ENCODE measurements at regions of chr7 and their contacts with region 1.

Region 1: DNA sequence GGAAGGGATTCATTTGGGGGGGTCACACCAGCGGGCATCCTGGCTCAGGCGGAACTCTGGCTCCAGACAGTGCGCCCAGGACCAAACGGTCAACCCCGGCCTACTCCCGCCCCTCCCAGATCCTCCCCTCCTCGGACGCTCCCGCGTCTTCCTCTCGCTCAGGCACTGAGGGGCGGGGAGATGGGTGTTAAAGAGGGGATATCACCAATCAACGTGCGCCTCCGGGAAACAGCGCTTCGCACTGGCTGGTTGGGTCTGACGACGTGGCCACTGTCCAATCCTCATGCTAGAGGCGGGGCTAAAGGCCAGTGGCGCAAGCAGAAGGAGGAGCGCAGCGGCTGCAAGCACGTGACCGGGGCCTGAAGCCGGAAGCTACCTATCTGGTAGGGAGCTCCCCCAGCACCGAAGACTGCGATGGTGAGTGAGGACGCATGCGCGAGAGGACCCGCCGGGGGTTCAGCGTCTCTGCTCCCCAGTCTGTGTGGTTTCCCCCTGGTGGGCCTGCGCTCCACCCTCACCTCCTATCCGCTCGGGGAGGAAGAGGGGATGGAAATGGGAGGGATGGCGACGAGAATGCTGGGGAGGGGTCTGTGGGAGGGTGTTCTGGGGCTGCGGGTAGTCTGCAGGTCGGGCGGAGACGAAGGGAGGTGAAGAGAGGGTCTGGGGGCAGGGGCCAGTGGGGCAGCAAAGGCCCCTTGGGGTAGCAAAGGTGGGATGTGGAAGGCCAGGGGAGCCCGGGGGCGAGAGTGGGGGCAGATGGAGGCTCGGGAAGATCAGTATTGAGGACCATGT is at the start of gene LAMTOR4:
- H3K4me3 ChIP-seq: peak within 1 kb of the TSS; percentile 74
- H3K27ac ChIP-seq: peak within 1 kb of the TSS; percentile 68
- H3K4me1 ChIP-seq: peaks cover 10% of the 10 kb centered on the region
- CTCF ChIP-seq: no peak; the same call in 1 of the 2 replicates

Region 2: DNA sequence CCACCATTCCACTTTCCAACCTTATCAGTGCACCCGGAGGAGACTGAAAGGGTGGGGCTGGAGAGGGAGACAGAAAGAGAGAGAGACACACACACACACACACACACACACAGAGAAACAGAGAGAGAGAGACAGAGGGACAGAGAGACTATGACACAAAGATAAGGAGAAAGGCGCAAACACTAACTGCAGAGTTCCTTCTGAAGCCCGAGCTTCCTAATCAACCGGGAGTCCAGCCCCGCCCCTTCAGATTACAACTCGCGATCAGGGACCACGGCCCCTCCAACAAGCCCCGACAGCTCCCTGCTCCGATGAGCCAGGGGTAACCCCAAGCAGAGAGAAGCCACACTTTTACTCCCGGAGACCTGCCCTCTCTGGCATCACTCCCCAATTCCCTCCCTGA is 19.2 kb after region 1 on chr7:
- CTCF ChIA-PET with region 1: no interaction called
- POLR2A ChIA-PET with region 1: interaction called, 13 read pairs
- H3K4me3 ChIP-seq: no peak overlapping the region
- H3K27ac ChIP-seq: no peak overlapping the region
- H3K4me1 ChIP-seq: peaks cover 7% of the 10 kb centered on the region
- CTCF ChIP-seq: no peak

Region 3: GRCh38 chr7:100177045-100178001 is 28.6 kb after region 1 on chr7 and contains the starts of genes GPC2 and STAG3:
- CTCF ChIA-PET with region 1: no interaction called
- POLR2A ChIA-PET with region 1: interaction called, 14 read pairs
- H3K4me3 ChIP-seq: peak within 1 kb of the TSS; percentile 66
- H3K27ac ChIP-seq: no peak within 1 kb of the TSS
- H3K4me1 ChIP-seq: no peaks in the 10 kb centered on the region
- CTCF ChIP-seq: no peak